Posterior cingulate gyrus (tissue), 11 donors: ENCODE measurements at regions of chr12 and their contacts with region 1.

Region 1: GRCh38 chr12:14629832-14630710 is 62.4 kb upstream of the PLBD1 start:
- DNase-seq: peak in 8 of 10 donors; percentile 55 to 91 (median 68)

Region 2: DNA sequence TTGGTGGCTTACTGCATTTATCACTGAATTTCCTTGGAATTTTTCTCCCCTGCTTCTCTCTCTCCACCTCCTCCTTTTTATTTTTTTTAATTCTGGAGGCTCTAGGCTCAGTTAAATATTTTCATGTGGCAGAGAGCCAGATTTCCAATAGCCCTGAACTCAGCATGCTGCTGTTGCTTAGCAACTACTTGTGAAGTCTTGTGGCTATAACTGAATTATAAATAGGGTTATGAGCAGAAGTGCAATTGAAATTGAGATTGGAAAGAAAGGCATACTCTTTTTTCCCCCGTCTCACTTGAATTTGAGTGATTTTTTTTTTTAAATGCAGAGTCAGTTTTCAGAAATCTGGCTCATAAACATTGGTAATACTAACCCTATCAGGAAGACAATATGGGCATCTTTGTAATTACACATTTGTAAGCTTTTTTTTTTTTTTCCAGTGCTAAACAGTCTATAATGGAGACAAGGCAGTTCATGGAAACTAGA is 226.3 kb before region 1 on chr12:
- intact Hi-C with region 1: no loop called
- DNase-seq: peak in 1 of 10 donors; percentile 27

Region 3: GRCh38 chr12:14716848-14717444 is 86.9 kb after region 1 on chr12:
- intact Hi-C with region 1: loop called (anchors 5 kb)
- DNase-seq: peak in 1 of 10 donors; percentile 30